ENCODE measurements at regions of chr5 and their contacts with region 1.

Region 1: DNA sequence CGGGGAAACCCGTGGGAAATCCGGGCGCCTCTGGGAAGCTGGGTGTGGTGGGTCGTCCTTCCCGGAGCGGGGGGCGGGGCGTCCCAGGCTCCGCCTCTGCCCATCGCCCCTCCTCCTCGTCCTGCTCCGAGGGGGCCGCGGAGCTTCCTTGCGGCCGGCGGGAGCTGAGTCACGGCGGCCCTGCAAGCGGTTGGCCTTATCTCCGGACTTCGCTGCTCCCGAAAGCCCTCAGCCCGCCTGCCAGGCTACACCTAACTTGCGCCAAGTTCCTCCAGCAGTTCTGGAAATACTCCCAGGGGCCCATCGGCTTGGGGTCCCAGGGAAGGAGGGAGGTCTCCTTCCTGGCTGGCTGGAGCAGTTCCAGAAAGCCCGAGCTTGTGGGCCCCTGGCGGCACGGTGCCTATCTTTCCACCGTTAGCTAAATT is 54.1 kb upstream of the CDKN2AIPNL start:
- DNase-seq: peak; percentile 77
- ATAC-seq: peak; percentile 90
- H3K4me3 Mint-ChIP-seq: peak overlapping the region; percentile 74
- H3K27ac Mint-ChIP-seq: peak overlapping the region; percentile 71
- H3K4me1 Mint-ChIP-seq: peaks cover 14% of the 10 kb centered on the region
- H3K27me3 Mint-ChIP-seq: no peaks in the 10 kb centered on the region

Region 2: GRCh38 chr5:132586063-132586462 is 1879.8 kb before region 1 on chr5:
- CTCF ChIA-PET with region 1: no interaction called
- POLR2A ChIA-PET with region 1: no interaction called
- intact Hi-C with region 1: no loop called
- DNase-seq: no peak
- ATAC-seq: no peak
- H3K4me3 Mint-ChIP-seq: no peak overlapping the region
- H3K27ac Mint-ChIP-seq: no peak overlapping the region
- H3K4me1 Mint-ChIP-seq: peaks cover 3% of the 10 kb centered on the region
- H3K27me3 Mint-ChIP-seq: no peaks in the 10 kb centered on the region

Region 3: GRCh38 chr5:134439210-134439664 is 26.6 kb before region 1 on chr5:
- CTCF ChIA-PET with region 1: no interaction called
- POLR2A ChIA-PET with region 1: no interaction called
- intact Hi-C with region 1: no loop called
- DNase-seq: no peak
- ATAC-seq: no peak
- H3K4me3 Mint-ChIP-seq: no peak overlapping the region
- H3K27ac Mint-ChIP-seq: no peak overlapping the region
- H3K4me1 Mint-ChIP-seq: peaks cover 24% of the 10 kb centered on the region
- H3K27me3 Mint-ChIP-seq: no peaks in the 10 kb centered on the region

Region 4: DNA sequence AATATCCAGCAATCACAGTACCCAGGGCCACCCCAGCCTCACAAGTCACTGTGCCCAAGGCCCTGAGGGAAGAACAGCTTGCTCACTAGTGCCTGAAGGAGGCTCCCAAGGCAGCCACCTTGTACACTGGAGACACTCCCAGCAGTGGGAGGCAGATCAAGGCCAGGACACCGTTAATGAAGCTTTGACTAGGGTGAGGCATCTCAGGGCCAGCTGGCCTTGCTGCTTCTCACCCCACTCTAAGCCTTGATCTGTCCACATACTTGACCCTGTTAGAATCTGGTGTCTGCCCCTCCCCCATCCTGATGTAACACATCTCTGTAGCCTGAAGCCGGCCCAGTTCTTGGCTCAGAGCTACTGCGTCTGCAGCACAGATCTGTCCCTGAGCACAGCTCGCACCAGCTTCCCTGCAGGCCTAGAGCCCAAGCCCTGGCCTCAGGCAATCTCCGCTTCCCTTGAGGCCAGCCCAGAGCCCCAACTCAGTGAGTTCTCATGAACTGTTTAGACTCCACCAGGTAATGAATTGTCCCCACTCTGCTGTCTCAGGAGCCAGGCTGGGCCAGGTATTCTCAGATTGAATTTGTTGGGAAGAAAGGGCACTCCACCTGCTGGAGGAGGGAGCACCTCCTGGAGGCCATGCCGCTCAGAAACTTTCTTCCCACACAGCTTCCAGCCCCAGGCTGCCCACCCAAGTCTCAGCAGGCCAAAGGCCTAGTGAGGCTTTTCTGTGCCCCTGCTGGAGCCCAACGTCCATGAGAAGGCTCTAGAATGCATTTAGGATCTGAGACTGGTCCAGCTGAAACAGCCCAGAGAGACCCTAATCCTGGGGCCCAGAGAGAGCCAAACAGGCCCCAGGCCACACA is 46.2 kb after region 1 on chr5:
- CTCF ChIA-PET with region 1: no interaction called
- POLR2A ChIA-PET with region 1: interaction called, 4 read pairs
- intact Hi-C with region 1: loop called in 1 of 2 experiments (anchors 5 kb)
- DNase-seq: peak; percentile 34
- ATAC-seq: no peak
- H3K4me3 Mint-ChIP-seq: no peak overlapping the region
- H3K27ac Mint-ChIP-seq: peak overlapping the region; percentile 38
- H3K4me1 Mint-ChIP-seq: peaks cover 36% of the 10 kb centered on the region
- H3K27me3 Mint-ChIP-seq: no peaks in the 10 kb centered on the region